GM12878 (cell line): ENCODE measurements at regions of chr16 and their contacts with region 1.

Region 1: DNA sequence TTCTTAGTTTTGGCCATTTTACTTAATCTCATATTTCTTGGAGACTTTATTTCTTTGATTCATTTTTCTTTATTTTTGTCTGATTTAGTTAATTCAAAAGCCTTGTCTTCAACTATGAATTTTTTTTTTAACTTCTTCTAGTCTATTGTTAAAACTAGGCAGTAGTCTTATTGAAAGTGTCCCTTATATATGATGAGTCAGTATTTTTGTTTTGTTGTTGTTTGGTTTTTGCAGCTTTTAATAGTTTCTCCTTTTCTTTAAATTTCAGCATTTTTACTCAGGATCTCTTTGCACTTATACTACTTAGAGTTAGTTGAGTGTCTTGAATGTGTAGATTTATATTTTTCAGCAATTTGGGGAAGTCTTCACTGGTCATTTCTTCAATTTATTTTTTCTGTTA is 758.5 kb upstream of the CDH8 start:
- DNase-seq: no peak
- ATAC-seq: no peak
- H3K4me3 ChIP-seq: no peak overlapping the region
- H3K27ac ChIP-seq: no peak overlapping the region
- H3K4me1 ChIP-seq: no peaks in the 10 kb centered on the region
- H3K27me3 ChIP-seq: no peaks in the 10 kb centered on the region
- CTCF ChIP-seq: no peak
- EP300 ChIP-seq: no peak
- POLR2A ChIP-seq: no peak
- RAD21 ChIP-seq: no peak

Region 2: DNA sequence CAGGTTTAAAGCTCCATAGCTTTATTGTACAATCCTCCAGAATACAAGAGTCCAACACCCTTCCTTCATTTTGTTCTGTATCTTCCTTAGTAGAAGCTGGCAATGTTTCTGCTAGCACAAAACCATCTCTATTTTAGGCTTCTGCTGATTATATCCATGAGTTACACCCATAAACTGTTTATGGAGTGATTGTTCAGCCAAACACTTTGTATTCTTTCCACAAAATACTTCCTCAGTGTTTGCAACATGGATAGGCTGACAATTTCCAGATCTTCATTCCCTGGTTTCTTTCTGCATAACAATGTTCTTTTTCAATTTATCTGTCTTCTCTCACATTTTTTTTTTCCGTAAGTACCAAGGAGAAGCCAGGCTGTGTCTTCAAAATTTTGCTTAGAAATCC is 81.4 kb after region 1 on chr16:
- CTCF ChIA-PET with region 1: no interaction called
- POLR2A ChIA-PET with region 1: no interaction called
- RAD21 ChIA-PET with region 1: no interaction called
- SMC1A ChIA-PET with region 1: no interaction called
- in situ Hi-C with region 1: loop called (anchors 25 kb)
- intact Hi-C with region 1: no loop called
- DNase-seq: no peak
- ATAC-seq: no peak
- H3K4me3 ChIP-seq: no peak overlapping the region
- H3K27ac ChIP-seq: no peak overlapping the region
- H3K4me1 ChIP-seq: no peaks in the 10 kb centered on the region
- H3K27me3 ChIP-seq: no peaks in the 10 kb centered on the region
- CTCF ChIP-seq: no peak
- EP300 ChIP-seq: no peak
- POLR2A ChIP-seq: no peak
- RAD21 ChIP-seq: no peak